WTC11 (cell line): ENCODE measurements at regions of chr3 and their contacts with region 1.

Region 1: GRCh38 chr3:37974121-37975083 is 16.2 kb upstream of the VILL start:
- DNase-seq: peak; percentile 77
- ATAC-seq: peak; percentile 95
- H3K4me3 Mint-ChIP-seq: no peak overlapping the region
- H3K27ac Mint-ChIP-seq: peak overlapping the region; percentile 3; the same call in 1 of the 2 replicates
- H3K4me1 Mint-ChIP-seq: peaks cover 13% of the 10 kb centered on the region
- H3K27me3 Mint-ChIP-seq: peaks cover 2% of the 10 kb centered on the region; the same call in 1 of the 2 replicates
- CTCF ChIP-seq: peak; percentile 78

Region 2: GRCh38 chr3:37956723-37957528 is 17.5 kb before region 1 on chr3:
- CTCF ChIA-PET with region 1: interaction called, 15 read pairs
- POLR2A ChIA-PET with region 1: no interaction called
- DNase-seq: no peak
- ATAC-seq: no peak
- H3K4me3 Mint-ChIP-seq: no peak overlapping the region
- H3K27ac Mint-ChIP-seq: peak overlapping the region; percentile 86
- H3K4me1 Mint-ChIP-seq: peaks cover 30% of the 10 kb centered on the region
- H3K27me3 Mint-ChIP-seq: no peaks in the 10 kb centered on the region
- CTCF ChIP-seq: no peak

Region 3: DNA sequence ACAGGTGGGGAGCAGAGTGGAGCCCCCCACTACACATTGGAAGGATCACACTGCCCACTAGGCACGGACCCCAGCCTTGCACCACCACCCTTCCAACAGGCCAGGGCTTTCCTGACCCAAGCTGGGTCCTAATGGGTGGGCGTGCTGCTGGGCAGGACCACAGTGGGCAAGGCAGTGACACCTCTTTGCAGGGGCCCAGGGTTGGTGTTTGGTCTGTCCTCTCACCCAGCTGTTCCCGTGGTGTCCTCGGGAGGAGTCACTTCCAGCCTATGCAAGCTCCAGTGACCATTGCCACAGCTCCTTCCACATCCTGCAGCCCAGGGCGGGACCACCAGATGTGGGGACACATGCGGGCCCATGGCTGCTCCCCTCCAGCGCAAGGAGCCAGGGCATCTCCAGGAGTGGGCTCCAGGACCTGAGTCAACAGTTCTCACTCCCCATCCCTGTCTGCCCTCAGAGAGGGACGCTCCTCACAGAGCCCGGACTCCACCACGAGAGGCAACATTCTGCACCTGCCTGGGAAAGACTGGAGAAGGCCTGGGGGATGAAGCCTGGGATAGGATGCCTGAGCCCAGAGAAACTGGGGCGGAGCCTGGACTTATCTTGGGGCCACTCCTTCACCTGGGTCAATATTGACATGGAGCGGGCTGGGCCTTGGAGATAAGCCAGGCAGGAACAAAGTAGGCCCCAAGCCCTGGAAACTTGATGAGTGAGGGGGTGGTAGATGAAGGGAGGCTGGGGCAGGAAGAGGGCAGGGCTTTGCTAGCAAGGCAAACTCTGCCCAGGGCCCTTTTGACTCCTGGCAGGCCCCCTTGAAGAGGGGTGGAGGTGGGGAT is 12.3 kb after region 1 on chr3:
- CTCF ChIA-PET with region 1: interaction called, 61 read pairs
- POLR2A ChIA-PET with region 1: no interaction called
- DNase-seq: no peak
- ATAC-seq: peak; percentile 26
- H3K4me3 Mint-ChIP-seq: no peak overlapping the region
- H3K27ac Mint-ChIP-seq: no peak overlapping the region
- H3K4me1 Mint-ChIP-seq: peaks cover 13% of the 10 kb centered on the region
- H3K27me3 Mint-ChIP-seq: no peaks in the 10 kb centered on the region; the same call in 1 of the 2 replicates
- CTCF ChIP-seq: no peak

Region 4: GRCh38 chr3:38004415-38005076 is 30.1 kb after region 1 on chr3:
- CTCF ChIA-PET with region 1: interaction called, 25 read pairs
- POLR2A ChIA-PET with region 1: no interaction called
- DNase-seq: peak; percentile 72
- ATAC-seq: peak; percentile 58
- H3K4me3 Mint-ChIP-seq: no peak overlapping the region
- H3K27ac Mint-ChIP-seq: peak overlapping the region; percentile 76; the same call in 1 of the 2 replicates
- H3K4me1 Mint-ChIP-seq: peaks cover 5% of the 10 kb centered on the region
- H3K27me3 Mint-ChIP-seq: no peaks in the 10 kb centered on the region
- CTCF ChIP-seq: no peak

Region 5: DNA sequence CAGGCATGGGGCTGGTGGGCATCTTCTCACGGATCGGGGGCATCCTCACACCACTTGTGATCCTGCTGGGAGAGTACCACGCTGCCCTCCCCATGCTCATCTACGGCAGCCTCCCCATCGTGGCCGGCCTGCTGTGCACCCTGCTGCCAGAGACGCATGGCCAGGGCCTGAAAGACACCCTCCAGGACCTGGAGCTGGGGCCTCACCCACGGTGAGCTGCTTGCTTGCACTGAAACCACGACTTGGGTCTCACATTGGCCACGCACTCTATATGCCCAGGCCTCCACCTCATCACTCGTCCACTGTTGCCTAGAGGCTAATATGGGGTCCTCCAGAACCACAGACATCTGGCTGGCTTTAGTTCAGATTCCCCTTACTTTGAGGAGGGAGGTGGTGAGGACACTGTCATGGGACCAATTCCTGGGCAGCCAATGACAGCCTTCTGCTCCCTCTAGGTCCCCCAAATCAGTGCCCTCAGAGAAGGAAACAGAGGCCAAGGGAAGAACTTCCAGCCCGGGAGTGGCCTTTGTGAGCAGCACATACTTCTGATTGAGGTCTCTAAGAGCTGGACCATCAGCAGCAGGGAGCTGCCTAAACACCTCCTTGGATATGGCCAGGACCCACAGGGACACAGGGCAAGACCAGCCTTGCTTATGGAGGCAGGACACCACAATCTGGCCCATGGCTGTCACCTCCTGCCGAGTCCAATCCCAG is 302.7 kb after region 1 on chr3:
- CTCF ChIA-PET with region 1: no interaction called
- POLR2A ChIA-PET with region 1: no interaction called
- DNase-seq: no peak
- ATAC-seq: no peak
- H3K4me3 Mint-ChIP-seq: no peak overlapping the region
- H3K27ac Mint-ChIP-seq: no peak overlapping the region
- H3K4me1 Mint-ChIP-seq: peaks cover 3% of the 10 kb centered on the region; the same call in 1 of the 2 replicates
- H3K27me3 Mint-ChIP-seq: no peaks in the 10 kb centered on the region
- CTCF ChIP-seq: no peak